Astrocyte of the cerebellum (primary cell): ENCODE measurements at regions of chr2 and their contacts with region 1.

Region 1: DNA sequence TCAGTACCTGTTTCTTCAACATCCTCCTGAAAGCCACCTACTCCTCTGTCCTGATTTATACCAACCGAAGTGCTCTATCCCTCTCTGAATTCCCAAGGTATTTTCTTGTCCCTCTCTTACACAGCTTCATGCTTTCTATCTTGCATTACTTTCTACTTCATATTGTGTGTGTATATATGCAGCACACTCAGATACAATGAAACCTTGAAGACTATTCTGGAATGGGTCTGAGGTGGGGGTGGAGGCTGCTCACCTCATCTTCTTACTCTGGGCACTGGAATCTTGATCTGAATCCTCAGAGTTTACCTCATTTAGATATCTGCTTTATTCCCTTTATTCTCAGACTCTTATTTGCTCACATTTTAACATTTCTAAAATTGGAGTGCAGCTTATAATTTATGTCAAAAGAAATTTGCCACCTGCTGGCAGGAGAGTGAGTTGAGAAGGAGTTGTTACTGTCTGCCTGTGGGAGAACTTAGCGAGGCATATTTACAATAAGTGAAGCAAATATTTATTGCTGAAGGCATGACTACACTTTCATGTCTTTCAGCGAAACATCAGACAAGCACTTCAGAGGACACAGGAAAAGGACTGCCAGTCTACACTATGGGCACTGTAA is 16.6 kb upstream of the KIAA2012 start:
- DNase-seq: no peak
- H3K4me3 ChIP-seq: no peak overlapping the region
- CTCF ChIP-seq: peak; percentile 48

Region 2: GRCh38 chr2:201532686-201533304 is 523.7 kb before region 1 on chr2:
- in situ Hi-C with region 1: no loop called
- DNase-seq: no peak
- H3K4me3 ChIP-seq: no peak overlapping the region
- CTCF ChIP-seq: no peak

Region 3: DNA sequence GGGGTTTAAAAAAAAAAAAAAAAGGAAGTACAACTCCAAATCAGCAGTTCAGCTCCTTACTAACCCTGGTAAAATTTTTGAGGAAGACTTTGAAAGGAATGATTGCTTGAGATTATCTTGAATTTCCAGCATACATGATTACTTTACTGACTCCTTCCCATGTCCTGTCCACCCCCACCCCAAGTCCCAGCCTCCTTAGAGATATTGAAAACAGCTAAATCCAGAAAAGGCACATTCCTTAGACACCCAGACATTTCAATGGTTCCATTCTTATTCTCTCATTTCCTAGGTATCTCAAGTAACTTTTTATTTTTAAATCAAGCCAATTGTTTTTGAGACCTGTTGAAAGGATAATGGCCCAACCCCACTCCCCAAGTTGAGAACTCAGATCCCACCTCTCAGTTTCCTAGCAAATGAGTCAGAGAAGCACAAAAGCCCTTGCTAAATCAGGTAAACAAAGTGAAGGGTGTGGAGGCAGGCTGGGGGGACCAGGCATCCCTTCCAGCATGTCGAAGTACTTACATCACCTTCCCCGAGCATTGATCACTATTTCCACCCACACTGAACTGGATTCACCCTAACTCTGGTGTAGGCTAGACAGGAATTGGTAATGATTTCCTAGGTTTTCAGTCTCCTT is 118.2 kb before region 1 on chr2:
- in situ Hi-C with region 1: no loop called
- DNase-seq: no peak
- H3K4me3 ChIP-seq: no peak overlapping the region
- CTCF ChIP-seq: no peak

Region 4: DNA sequence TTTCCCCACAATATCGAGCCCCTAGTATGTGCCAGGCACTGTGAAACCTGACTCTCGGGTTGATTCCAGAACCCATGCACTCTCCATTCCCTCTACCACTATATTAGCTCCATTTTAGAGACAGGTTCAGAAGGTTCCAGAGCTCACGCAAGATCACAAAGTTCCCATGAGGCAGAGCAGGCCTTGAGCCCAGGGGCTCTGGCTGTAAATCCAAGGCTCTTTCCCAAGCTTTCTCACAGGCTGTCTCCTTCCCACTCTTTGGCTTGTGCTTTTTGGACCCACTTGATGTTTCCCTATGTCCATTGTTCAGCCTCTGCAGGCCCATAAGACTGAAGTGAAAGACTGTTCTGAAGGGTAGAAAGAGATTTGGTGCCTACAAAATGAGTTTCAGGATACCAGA is 32.3 kb after region 1 on chr2:
- in situ Hi-C with region 1: loop called (anchors 5 kb)
- DNase-seq: no peak
- H3K4me3 ChIP-seq: no peak overlapping the region
- CTCF ChIP-seq: no peak

Region 5: GRCh38 chr2:202158796-202159195 is 102.3 kb after region 1 on chr2:
- in situ Hi-C with region 1: loop called (anchors 5 kb)
- DNase-seq: no peak
- H3K4me3 ChIP-seq: no peak overlapping the region
- CTCF ChIP-seq: peak; percentile 52